ENCODE measurements at regions of chr14 and their contacts with region 1.

Region 1: DNA sequence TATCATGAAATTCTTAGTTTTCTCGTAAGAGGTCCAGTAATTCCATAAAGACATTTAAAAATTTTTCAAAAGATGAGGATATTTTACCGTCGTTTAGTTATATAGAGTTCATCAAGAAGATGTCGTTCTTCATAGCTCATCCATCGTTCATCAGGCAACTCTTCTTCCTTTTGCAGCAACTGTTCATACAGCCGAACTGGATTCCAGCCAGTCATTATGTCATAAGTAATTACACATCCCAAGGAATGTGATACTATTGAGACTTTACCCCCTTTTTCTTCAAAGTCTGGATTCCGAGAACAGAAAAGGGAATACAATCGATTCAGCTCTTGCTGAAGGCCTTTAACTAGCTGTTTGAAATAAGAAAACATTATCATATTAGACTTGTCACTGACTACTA is 90.3 kb downstream of the DDHD1 start:
- DNase-seq: no peak
- H3K4me3 Mint-ChIP-seq: no peak overlapping the region
- H3K27ac Mint-ChIP-seq: no peak overlapping the region
- H3K4me1 Mint-ChIP-seq: peaks cover 12% of the 10 kb centered on the region
- H3K27me3 Mint-ChIP-seq: no peaks in the 10 kb centered on the region

Region 2: GRCh38 chr14:52961060-52961639 is 101.7 kb before region 1 on chr14:
- intact Hi-C with region 1: no loop called
- DNase-seq: peak; percentile 80
- H3K4me3 Mint-ChIP-seq: no peak overlapping the region
- H3K27ac Mint-ChIP-seq: no peak overlapping the region
- H3K4me1 Mint-ChIP-seq: peaks cover 2% of the 10 kb centered on the region
- H3K27me3 Mint-ChIP-seq: peaks cover 2% of the 10 kb centered on the region

Region 3: DNA sequence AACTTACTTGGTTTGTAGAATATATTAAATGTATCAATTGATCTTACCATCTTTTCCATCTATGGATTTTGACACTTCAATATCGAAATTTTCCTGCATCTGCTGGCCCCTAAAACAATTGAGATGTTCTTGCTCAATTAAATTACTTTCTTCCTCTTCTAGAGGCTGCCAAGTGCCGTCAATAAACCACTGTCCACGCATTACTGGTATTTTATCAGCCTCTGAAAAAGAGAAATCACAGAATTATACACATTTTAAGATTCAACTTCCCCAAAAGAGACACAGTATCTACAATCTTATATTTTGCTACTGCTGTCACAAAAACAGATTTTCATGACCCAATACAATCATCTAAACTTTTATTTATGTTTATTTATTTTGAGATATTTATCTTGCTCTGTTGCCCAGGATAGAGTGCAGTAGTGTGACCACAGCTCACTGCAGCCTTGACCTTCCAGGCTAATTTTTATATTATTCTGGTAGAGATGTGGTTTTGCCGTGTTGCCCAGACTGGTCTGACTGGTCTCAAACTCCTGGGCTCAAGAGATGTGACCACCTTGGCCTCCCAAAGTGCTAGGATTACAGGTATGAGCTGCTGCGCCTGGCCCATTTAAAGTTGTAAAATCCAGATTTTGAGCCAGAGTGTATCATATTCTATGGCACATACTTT is 40.9 kb after region 1 on chr14:
- intact Hi-C with region 1: loop called (anchors 5 kb)
- DNase-seq: no peak
- H3K4me3 Mint-ChIP-seq: no peak overlapping the region
- H3K27ac Mint-ChIP-seq: no peak overlapping the region
- H3K4me1 Mint-ChIP-seq: peaks cover 26% of the 10 kb centered on the region
- H3K27me3 Mint-ChIP-seq: no peaks in the 10 kb centered on the region

Measured in activated CD4-positive, alpha-beta T cell treated with anti-CD3 and anti-CD28 coated beads, Interleukin-2, amount 10 ng/mL, durations not matched to agents 24 days and 14 days (primary cell).